AG04449 (cell line): ENCODE measurements at regions of chr11 and their contacts with region 1.

Region 1: GRCh38 chr11:18731949-18732821 is 6.2 kb upstream of the IGSF22 start:
- DNase-seq: no peak
- H3K4me3 ChIP-seq: no peak overlapping the region
- CTCF ChIP-seq: peak; percentile 87

Region 2: GRCh38 chr11:18115360-18116127 is 616.6 kb before region 1 on chr11:
- CTCF ChIA-PET with region 1: interaction called, 26 read pairs
- POLR2A ChIA-PET with region 1: no interaction called
- DNase-seq: no peak
- H3K4me3 ChIP-seq: no peak overlapping the region
- CTCF ChIP-seq: peak; percentile 83

Region 3: DNA sequence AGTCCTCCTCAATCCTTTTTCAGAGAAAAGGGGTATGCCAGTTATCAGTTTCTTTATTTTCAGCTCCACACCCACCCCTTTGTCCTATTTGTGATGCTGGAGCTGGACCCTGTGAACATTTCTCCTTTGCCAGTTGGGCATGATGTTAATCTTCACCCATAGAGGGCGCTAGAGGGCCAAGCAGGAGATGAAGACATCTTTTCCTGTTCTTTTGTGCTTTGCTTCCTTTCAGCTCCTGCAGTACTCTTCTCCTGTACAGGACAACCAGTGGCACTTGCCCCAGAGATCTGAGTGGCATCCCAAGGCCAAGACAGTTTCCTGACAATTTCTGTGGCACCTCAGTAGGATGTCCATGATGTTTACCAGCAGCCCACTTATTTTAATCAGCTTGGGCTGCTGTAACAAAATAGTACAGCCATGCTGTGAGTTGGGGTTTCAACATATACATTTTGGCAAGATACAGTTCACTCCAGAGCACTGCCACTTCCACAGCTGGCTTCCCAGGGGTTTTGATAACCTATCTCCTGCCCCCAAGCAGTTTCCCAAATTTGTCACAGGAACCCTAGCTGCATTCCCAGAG is 488.3 kb before region 1 on chr11:
- CTCF ChIA-PET with region 1: interaction called, 13 read pairs
- POLR2A ChIA-PET with region 1: no interaction called
- DNase-seq: peak; percentile 19
- H3K4me3 ChIP-seq: no peak overlapping the region
- CTCF ChIP-seq: peak; percentile 85

Region 4: GRCh38 chr11:18540207-18541009 is 191.8 kb before region 1 on chr11:
- CTCF ChIA-PET with region 1: interaction called, 27 read pairs
- POLR2A ChIA-PET with region 1: no interaction called
- DNase-seq: no peak
- H3K4me3 ChIP-seq: no peak overlapping the region
- CTCF ChIP-seq: peak; percentile 14

Region 5: GRCh38 chr11:18657673-18658072 is 74.5 kb before region 1 on chr11:
- CTCF ChIA-PET with region 1: no interaction called
- POLR2A ChIA-PET with region 1: no interaction called
- DNase-seq: no peak
- H3K4me3 ChIP-seq: no peak overlapping the region
- CTCF ChIP-seq: no peak

Region 6: DNA sequence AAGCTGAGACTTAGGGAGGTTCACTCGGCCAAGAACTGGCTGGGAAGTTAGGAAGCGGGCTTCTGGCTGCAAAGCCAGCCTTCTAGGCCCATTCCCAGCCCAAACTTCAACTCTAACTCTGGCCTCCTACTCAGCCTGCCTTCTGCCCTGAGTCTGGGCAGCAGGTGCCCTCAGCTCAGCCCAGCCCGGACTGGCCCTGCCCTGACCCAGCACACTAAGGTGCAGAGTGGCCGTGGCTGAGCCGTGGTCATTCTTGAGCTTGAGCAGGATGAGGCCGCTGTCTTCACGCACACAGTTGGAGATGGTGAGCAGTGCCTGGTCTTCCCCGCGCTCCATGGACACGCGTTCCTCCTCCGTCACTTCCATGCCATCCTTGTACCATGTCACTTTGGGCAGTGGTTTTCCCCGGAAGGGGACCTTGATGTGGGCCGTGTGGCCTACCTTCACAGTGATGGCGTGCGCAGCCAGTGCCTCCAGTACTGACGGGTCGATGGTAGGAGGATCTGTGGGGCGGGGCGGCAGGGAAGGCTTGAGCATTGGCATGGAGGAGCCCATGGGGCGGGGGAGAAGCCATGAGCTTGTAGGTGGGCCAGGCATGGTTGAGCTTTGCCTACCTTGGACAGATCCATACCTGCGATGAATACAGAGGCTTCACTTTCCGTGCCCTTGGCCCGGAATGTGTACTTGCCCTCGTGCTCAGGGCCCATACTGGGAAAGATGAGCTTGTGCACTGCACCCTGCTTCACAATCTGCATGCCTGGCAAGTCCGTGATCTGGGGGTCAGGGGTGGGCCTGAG is 18.3 kb before region 1 on chr11:
- CTCF ChIA-PET with region 1: interaction called, 132 read pairs
- POLR2A ChIA-PET with region 1: no interaction called
- DNase-seq: no peak
- H3K4me3 ChIP-seq: no peak overlapping the region
- CTCF ChIP-seq: no peak

Region 7: DNA sequence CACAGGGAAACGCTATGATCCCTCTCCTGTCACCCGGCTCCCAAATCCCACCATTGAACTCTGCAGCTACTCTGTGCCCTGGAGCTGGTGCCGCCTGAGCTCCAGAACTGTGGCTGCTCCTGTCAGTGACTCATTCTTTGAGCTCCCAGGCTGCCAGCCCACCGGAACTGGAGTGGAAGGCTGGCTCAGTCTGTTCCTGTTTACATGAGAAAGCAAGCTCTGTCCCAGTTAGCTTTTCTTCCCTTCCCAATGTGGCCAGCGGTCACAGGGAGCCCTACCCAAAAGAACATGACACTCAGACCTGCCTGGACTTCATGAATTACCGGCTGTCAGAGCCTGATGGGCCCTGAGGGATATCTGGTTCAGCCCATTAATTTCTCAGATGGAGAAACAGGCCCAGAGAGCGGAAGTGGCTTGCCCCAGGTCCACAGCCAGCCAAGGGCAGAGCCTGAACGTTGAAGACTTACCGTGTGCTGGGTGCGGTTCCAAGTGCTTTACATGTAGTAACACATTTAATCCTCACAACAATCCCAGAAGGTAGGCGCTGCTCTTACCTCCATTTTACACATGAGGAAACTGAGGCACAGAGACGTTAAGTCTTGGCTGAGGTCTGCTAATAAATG is 17.6 kb after region 1 on chr11:
- CTCF ChIA-PET with region 1: interaction called, 72 read pairs
- POLR2A ChIA-PET with region 1: no interaction called
- DNase-seq: no peak
- H3K4me3 ChIP-seq: no peak overlapping the region
- CTCF ChIP-seq: no peak